Sigmoid colon (tissue), 7 donors: ENCODE measurements at regions of chr1 and their contacts with region 1.

Region 1: GRCh38 chr1:9352377-9353134 is 59.9 kb downstream of the SPSB1 start:
- DNase-seq: no peak
- H3K4me3 ChIP-seq: peak overlapping the region in 1 of 4 donors; percentile 21
- H3K27ac ChIP-seq: peak overlapping the region in 3 of 4 donors; percentile 54 to 79 (median 67)
- H3K4me1 ChIP-seq: peaks cover 0 to 80% (median 53%) of the 10 kb centered on the region in 4 donors
- H3K27me3 ChIP-seq: no peaks in the 10 kb centered on the region
- CTCF ChIP-seq: no peak
- EP300 ChIP-seq: no peak
- POLR2A ChIP-seq: no peak

Region 2: DNA sequence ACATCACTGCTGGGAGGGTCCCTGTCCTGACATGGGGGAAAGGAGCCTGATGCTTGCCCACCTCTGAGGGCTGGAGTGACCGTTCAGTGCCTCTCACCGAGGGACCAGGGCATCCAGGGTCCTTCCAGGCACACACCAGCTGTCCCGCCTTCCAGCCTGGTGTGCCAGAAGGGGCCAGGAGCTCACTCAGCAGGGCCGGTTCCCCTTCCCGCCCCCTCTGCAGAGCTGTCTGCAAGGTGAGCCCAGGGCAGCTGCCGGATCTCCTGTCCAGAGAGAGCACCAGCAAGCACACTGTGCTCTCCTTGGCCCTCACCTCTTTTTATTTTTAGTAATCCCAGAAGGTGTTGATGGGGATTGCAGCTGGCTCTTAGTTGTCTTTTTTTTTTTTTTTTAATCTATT is 101.1 kb before region 1 on chr1:
- intact Hi-C with region 1: no loop called
- DNase-seq: no peak
- H3K4me3 ChIP-seq: peak overlapping the region in 1 of 4 donors; percentile 6
- H3K27ac ChIP-seq: peak overlapping the region; percentile 58 to 81 (median 64)
- H3K4me1 ChIP-seq: peaks cover 0 to 63% (median 53%) of the 10 kb centered on the region in 4 donors
- H3K27me3 ChIP-seq: no peaks in the 10 kb centered on the region
- CTCF ChIP-seq: no peak
- EP300 ChIP-seq: no peak
- POLR2A ChIP-seq: no peak

Region 3: DNA sequence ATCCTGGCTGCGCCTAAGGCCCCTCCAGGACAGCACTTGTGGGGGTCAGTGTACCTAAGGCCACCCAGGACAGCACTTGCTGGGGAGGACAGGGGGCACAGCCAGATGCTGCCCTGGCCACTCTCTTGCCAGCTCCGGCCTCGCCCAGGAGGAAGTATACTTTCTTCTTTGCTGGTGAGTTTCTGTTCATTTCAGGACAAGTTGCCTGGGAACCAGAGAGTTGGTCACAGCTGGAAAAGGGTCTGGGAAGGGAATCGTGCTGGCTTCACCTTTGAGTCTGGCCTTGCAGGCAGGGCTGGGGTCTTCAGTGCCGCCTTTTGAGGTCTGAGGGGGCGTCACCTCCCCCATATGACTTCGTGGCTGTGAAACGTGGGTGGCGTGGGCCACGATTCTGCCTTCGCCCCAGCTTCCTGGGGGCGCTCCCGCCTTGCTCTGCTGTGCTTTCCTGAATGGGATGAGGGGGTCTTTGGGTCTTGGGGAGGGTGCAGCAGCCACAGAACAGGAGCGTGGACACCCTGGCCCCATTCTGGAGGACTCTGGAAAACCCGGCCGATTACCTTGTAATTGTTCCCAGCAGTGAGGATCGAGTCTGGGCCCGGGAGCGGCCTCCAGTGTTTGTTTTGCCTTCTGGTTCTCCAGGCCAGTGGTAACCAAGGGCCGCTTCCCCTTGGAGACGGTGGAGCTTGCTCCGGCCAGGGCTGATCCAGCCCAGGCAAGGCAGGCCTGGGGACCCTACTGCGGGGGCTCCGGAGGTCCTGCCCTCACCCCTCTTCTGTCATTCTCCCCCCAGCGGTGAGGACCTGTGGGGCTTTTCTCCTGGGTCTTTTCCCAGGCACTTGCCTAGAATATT is 13.9 kb before region 1 on chr1:
- intact Hi-C with region 1: loop called (anchors 1 kb)
- DNase-seq: peak; percentile 84
- H3K4me3 ChIP-seq: peak overlapping the region in 1 of 4 donors; percentile 9
- H3K27ac ChIP-seq: peak overlapping the region; percentile 59 to 85 (median 82)
- H3K4me1 ChIP-seq: peaks cover 0 to 93% (median 57%) of the 10 kb centered on the region in 4 donors
- H3K27me3 ChIP-seq: no peaks in the 10 kb centered on the region
- CTCF ChIP-seq: no peak
- EP300 ChIP-seq: no peak
- POLR2A ChIP-seq: no peak